ENCODE measurements at regions of chr19 and their contacts with region 1.

Region 1: DNA sequence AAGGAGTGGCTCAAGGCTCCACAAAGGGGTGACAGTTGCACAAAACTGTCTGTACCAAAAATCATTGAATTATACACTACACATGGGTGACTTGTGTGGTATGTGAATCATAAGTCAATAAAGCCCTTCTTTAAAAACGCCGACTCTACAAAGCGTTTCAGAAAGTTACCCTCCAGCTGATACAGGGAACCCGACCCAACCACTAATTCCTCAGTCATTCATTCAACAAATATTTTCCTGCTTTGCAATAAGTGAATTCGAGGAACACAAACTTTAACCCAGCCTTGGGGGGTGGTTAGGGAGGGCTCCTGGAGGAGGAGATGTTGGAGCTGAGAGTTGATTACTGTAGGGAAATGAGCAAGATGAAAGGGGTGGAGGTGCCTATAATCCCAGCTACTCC is 32.0 kb downstream of the LTBP4 start:
- DNase-seq: no peak
- ATAC-seq: no peak
- H3K4me3 ChIP-seq: no peak overlapping the region
- H3K4me3 Mint-ChIP-seq: no peak overlapping the region
- H3K27ac ChIP-seq: no peak overlapping the region
- H3K27ac Mint-ChIP-seq: no peak overlapping the region
- H3K4me1 ChIP-seq: peaks cover 4% of the 10 kb centered on the region
- H3K4me1 Mint-ChIP-seq: peaks cover 12% of the 10 kb centered on the region
- H3K27me3 ChIP-seq: peaks cover 0 to 3% of the 10 kb centered on the region in 2 experiments
- H3K27me3 Mint-ChIP-seq: peaks cover 5% of the 10 kb centered on the region
- CTCF ChIP-seq: no peak

Region 2: DNA sequence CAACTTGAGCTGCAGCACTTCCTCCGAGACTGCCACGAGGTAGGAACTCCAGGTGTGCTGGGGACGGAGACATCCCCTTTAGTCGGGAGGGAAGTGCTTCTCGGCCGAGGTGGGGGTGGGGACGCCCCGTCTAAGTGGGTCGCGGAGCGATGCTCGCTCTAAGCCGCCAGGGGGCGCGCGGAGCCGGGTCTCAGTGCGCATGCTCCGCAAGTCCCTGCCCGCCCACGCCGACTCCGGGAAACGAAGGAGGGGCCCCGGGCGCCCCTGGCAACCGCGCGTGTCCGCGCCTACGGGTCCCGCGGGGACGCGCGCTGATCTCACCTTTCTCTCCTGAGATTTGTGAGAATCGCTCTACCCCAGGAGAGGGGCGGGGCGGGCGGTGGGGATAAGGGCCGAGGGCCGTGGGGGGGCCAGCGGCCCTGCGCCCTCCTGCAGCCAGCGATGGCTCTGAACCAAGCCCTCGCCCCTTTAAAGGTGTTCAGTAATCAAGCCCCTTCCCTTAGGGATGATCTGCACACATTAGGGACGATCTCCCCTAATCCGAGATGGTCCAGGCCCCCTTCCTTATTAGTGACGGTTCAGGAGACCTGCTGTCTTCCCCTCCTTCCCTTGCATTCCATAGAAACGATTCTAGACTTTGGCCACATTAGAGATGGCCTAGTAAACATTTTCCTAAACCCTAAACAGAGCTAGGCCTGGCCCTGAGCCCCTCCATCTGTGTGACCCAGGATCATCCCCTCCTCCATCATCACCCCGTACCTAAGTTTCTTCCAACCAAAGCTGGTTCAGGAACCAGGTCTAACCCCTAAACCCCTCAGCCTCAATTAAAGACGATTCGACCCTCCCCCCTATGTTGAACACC is 103.9 kb before region 1 on chr19:
- CTCF ChIA-PET with region 1: interaction called, 6 read pairs
- POLR2A ChIA-PET with region 1: no interaction called
- intact Hi-C with region 1: loop called in 1 of 2 experiments (anchors 1 kb)
- DNase-seq: peak; percentile 77 to 94 (median 89)
- ATAC-seq: peak; percentile 90
- H3K4me3 ChIP-seq: peak overlapping the region; percentile 41 to 46
- H3K4me3 Mint-ChIP-seq: peak overlapping the region; percentile 66
- H3K27ac ChIP-seq: no peak overlapping the region
- H3K27ac Mint-ChIP-seq: peak overlapping the region; percentile 33
- H3K4me1 ChIP-seq: peaks cover 13% of the 10 kb centered on the region
- H3K4me1 Mint-ChIP-seq: peaks cover 14% of the 10 kb centered on the region
- H3K27me3 ChIP-seq: peaks cover 5 to 8% of the 10 kb centered on the region in 2 experiments
- H3K27me3 Mint-ChIP-seq: peaks cover 20% of the 10 kb centered on the region
- CTCF ChIP-seq: peak; percentile 92

Region 3: DNA sequence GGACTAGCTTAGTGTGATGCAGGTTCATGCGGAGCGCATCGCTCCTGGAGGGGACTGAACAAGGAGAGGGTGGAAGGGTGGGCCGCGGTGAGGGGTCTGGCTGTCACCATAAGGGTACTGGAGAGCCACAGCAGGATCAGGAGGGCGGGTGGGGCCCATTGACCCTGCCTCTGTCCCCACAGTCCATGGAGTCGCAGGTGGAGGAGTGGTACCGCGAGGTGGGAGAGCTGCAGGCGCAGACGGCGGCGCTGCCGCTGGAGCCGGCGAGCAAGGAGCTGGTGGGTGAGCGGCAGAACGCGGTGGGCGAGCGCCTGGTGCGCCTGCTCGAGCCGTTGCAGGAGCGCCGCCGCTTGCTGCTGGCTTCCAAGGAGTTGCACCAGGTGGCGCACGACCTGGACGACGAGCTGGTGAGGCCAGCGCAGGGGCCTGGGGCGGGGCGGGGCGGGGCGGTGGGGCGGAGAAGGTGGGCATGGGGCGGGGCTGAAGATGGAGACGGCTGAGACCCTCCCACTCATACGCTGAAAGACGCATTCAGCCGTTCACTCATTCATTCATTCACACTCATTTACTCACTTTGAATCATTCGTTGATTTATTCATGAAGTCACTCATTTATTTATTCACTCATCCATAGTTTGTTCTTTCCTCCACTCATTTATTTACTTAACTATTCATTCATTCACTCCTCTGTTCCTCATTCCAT is 84.0 kb before region 1 on chr19:
- CTCF ChIA-PET with region 1: interaction called, 34 read pairs
- POLR2A ChIA-PET with region 1: no interaction called
- intact Hi-C with region 1: loop called (anchors 1 to 2 kb)
- DNase-seq: peak; percentile 44 to 82 (median 74)
- ATAC-seq: peak; percentile 92
- H3K4me3 ChIP-seq: no peak overlapping the region
- H3K4me3 Mint-ChIP-seq: peak overlapping the region; percentile 22
- H3K27ac ChIP-seq: no peak overlapping the region
- H3K27ac Mint-ChIP-seq: no peak overlapping the region
- H3K4me1 ChIP-seq: peaks cover 4% of the 10 kb centered on the region
- H3K4me1 Mint-ChIP-seq: peaks cover 9% of the 10 kb centered on the region
- H3K27me3 ChIP-seq: peaks cover 16 to 26% of the 10 kb centered on the region in 2 experiments
- H3K27me3 Mint-ChIP-seq: peaks cover 57% of the 10 kb centered on the region
- CTCF ChIP-seq: peak; percentile 55

Region 4: GRCh38 chr19:40609561-40610395 is 23.4 kb before region 1 on chr19:
- CTCF ChIA-PET with region 1: interaction called, 33 read pairs
- POLR2A ChIA-PET with region 1: no interaction called
- intact Hi-C with region 1: loop called in 1 of 2 experiments (anchors 1 kb)
- DNase-seq: peak; percentile 71 to 90 (median 84)
- ATAC-seq: peak; percentile 35
- H3K4me3 ChIP-seq: peak overlapping the region; percentile 50 to 56
- H3K4me3 Mint-ChIP-seq: peak overlapping the region; percentile 78
- H3K27ac ChIP-seq: peak overlapping the region; percentile 72 to 89
- H3K27ac Mint-ChIP-seq: peak overlapping the region; percentile 94
- H3K4me1 ChIP-seq: peaks cover 44% of the 10 kb centered on the region
- H3K4me1 Mint-ChIP-seq: peaks cover 68% of the 10 kb centered on the region
- H3K27me3 ChIP-seq: no peaks in the 10 kb centered on the region
- H3K27me3 Mint-ChIP-seq: no peaks in the 10 kb centered on the region
- CTCF ChIP-seq: no peak

Region 5: DNA sequence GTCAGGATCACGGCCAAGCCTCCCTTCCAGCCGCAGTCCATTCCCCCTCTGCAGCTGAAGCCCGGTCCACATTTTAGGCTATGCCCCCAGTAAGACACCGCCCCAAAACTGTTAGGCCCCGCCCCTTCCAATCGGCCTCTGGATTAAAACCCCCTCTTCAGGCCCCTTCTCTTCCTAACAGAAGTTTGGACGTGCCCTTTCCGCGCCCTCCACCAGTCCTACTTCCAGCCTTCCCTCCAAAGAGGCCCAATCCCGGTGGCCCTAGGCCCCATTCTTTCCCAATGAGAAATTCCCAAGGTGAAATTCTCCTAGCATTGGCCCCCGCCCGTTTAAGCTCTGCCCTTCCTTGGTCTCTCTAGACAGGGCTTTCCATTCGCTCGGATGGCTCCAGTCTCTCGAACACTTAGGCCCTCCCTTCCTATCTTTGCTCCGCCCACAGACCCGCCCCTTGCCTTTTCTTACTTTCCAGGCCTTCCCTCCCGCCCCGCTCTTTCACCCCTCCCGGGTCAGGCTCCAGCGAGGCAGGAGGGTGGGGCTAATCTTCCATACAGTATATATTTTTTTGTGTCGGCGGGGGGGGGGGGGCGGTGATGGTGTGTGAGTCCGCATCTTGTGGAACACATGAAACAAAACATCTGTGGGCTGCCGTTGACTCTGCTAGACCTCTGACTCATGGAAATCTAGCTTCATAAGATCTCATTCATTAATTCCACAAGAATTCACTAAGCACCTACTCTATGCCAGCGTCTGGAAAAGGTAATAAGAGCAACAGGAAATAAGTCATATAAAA is 18.4 kb before region 1 on chr19:
- CTCF ChIA-PET with region 1: interaction called, 56 read pairs
- POLR2A ChIA-PET with region 1: no interaction called
- intact Hi-C with region 1: loop called in 1 of 2 experiments (anchors 1 kb)
- DNase-seq: peak in 8 of 9 experiments; percentile 57 to 83 (median 75)
- ATAC-seq: peak; percentile 14
- H3K4me3 ChIP-seq: peak overlapping the region; percentile 81 to 89
- H3K4me3 Mint-ChIP-seq: peak overlapping the region; percentile 94
- H3K27ac ChIP-seq: peak overlapping the region; percentile 13 to 57
- H3K27ac Mint-ChIP-seq: peak overlapping the region; percentile 91
- H3K4me1 ChIP-seq: peaks cover 20% of the 10 kb centered on the region
- H3K4me1 Mint-ChIP-seq: peaks cover 48% of the 10 kb centered on the region
- H3K27me3 ChIP-seq: no peaks in the 10 kb centered on the region
- H3K27me3 Mint-ChIP-seq: no peaks in the 10 kb centered on the region
- CTCF ChIP-seq: no peak

Measured in CD8-positive, alpha-beta T cell (primary cell).